AG04449 (cell line): ENCODE measurements at regions of chr14 and their contacts with region 1.

Region 1: GRCh38 chr14:72516936-72517700 is 376.8 kb downstream of the DPF3 start:
- DNase-seq: peak; percentile 56
- H3K4me3 ChIP-seq: 0 out of 2 replicates have a peak overlapping the region, but pooled peaks have one; percentile 9
- CTCF ChIP-seq: peak; percentile 84

Region 2: DNA sequence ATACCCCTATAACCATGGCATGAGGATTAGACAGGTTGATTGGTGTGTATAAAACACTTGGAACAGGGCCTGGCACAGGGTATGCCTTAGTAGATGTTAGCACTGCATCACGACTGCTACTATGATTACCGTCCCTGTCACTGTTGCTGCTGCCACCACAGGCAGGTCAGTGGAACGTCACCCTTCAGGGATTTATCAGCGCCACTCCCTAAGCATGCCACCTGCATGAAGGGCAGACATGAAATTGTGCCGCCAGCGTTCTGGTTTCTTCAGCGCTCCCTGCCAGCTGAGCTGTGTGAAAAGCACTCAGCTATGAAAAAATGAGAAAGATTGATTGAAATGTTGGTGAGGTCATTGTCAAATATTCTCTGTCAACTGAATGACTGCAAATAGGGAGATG is 100.2 kb before region 1 on chr14:
- CTCF ChIA-PET with region 1: no interaction called
- POLR2A ChIA-PET with region 1: no interaction called
- DNase-seq: no peak
- H3K4me3 ChIP-seq: no peak overlapping the region
- CTCF ChIP-seq: no peak

Region 3: GRCh38 chr14:72503696-72504368 is 13.3 kb before region 1 on chr14:
- CTCF ChIA-PET with region 1: interaction called, 38 read pairs
- POLR2A ChIA-PET with region 1: no interaction called
- DNase-seq: no peak
- H3K4me3 ChIP-seq: no peak overlapping the region
- CTCF ChIP-seq: no peak

Region 4: GRCh38 chr14:72736314-72736715 is 219.2 kb after region 1 on chr14:
- CTCF ChIA-PET with region 1: interaction called, 64 read pairs
- POLR2A ChIA-PET with region 1: no interaction called
- DNase-seq: peak; percentile 69
- H3K4me3 ChIP-seq: no peak overlapping the region
- CTCF ChIP-seq: peak; percentile 40

Region 5: DNA sequence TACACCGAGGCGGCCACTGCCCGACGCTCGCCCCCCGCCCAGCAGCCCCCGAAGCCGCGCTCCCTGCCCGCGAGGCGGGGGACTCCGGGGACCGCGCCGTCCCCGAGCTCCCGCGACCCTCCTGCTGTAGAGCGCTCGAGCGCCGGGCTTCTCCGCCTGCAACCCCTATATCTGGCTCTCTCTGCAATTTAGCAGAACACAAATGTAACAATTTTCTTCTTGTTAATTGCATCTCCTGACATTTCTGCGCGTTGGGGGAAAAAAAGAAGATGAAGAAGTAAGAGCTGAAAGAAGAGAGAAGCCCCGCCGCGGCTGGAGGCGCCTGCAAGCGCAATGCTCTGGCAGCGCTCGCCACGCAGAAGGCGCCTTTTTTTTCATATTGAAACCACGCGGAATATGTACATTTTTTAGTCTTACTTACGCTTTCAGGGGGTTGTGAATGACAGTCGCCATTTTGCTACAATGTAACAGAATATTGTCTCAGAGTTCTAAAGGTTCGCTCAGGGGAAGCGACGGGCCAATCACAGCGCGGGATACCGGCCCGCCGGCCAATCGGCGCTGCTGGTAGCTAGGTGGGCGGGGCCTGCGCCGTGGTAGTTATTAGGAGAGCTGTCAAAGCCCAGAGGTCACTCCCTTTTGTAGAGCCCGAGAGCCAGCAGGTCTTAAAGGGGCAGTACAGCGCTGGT is 376.7 kb after region 1 on chr14 and contains the start of gene DPF3:
- CTCF ChIA-PET with region 1: interaction called, 45 read pairs
- POLR2A ChIA-PET with region 1: interaction called, 3 read pairs
- DNase-seq: peak; percentile 73
- H3K4me3 ChIP-seq: peak within 1 kb of the TSS; percentile 80
- CTCF ChIP-seq: no peak

Region 6: GRCh38 chr14:72926292-72927028 is 409.3 kb after region 1 on chr14 and contains the start of gene DCAF4:
- CTCF ChIA-PET with region 1: interaction called, 13 read pairs
- POLR2A ChIA-PET with region 1: no interaction called
- DNase-seq: peak; percentile 89
- H3K4me3 ChIP-seq: peak within 1 kb of the TSS; percentile 95
- CTCF ChIP-seq: no peak

Region 7: DNA sequence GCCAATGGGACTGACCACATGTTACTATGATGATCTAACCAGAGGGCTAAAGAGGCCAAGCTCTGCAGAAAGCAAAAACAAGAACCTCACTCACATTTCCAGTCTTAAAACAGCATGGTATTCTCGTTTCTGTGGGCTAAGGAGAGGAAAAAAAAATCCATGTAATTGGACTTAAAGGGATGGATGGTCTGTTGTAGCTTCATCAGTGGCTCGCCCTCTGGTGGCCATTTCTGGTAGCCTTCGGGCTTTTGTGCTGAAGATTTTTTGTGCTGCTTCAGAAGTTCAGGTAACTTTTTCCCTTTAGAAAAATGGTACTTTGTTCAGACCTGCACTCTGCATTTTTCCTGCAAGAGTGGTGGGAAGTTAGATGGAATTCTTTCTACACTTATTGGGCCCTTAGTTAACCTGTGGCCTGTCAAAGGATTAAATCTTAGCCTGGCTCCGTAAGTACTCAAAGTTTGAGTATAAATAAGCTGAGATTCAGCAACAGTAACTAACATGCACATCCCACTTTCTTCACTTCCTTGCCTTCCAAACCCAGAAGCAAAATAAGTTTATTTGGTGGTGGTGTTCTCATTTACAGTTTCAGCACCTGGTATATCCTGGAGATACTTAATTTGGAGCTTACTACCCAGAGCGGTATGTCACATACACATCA is 431.5 kb after region 1 on chr14:
- CTCF ChIA-PET with region 1: interaction called, 782 read pairs
- POLR2A ChIA-PET with region 1: no interaction called
- DNase-seq: no peak
- H3K4me3 ChIP-seq: no peak overlapping the region
- CTCF ChIP-seq: peak; percentile 75